ENCODE measurements at regions of chr17 and their contacts with region 1.

Region 1: DNA sequence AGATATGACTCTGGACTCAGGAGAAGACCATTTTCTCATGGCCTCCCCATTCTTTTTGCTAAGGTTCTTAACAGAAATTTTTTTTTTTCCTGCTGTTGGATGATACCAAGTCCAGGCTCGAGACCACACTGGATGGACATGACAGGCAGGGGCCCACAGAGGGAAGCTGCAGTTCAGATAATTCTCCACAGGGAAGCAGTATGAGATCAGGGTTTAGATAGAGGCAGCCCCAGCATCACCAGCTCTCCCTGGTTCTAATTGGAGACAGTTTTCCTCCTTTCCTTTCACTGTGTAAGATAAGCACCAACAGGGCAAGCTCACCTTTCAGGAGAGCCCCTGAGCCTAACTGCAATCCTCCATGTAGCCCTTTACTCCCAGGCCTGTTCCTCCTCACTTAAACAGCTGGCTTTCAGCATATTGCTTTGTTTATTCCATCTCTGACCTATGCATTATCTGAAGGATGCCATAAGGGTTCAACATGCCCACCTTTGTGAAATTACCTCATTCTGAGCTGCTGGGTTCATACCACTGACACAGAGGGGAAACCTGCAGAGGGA is 108.1 kb downstream of the SNX11 start:
- DNase-seq: peak; percentile 74
- H3K4me3 ChIP-seq: no peak overlapping the region
- H3K27ac ChIP-seq: no peak overlapping the region
- H3K4me1 ChIP-seq: peaks cover 3% of the 10 kb centered on the region
- H3K27me3 ChIP-seq: no peaks in the 10 kb centered on the region
- CTCF ChIP-seq: peak; percentile 71 to 90
- POLR2A ChIP-seq: no peak

Region 2: GRCh38 chr17:47742319-47743181 is 473.1 kb before region 1 on chr17:
- CTCF ChIA-PET with region 1: no interaction called
- POLR2A ChIA-PET with region 1: no interaction called
- dilution Hi-C with region 1: no loop called
- intact Hi-C with region 1: no loop called
- DNase-seq: no peak
- H3K4me3 ChIP-seq: no peak overlapping the region
- H3K27ac ChIP-seq: no peak overlapping the region
- H3K4me1 ChIP-seq: no peaks in the 10 kb centered on the region
- H3K27me3 ChIP-seq: peaks cover 0 to 7% of the 10 kb centered on the region in 2 experiments
- CTCF ChIP-seq: peak; percentile 35 to 61
- POLR2A ChIP-seq: no peak

Region 3: DNA sequence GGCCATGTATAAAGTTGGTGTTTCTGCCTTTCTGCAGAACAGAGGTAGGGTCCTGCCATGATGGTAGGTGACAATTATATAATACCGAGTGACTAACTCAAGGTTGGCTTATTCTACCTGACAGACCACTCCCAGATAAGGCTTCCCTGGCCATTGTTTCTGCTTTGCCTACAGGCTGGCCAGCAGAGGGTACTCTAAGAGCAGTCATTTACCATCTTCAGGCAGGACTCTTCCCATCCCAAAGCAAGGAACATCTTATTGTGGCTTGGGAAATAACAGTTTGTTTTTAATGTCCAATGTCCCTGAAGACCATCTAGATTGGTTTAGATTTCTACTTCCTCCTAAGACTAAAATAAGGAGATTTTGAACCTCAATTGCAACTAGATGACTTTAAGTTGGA is 34.0 kb before region 1 on chr17:
- CTCF ChIA-PET with region 1: interaction called, 13 read pairs
- POLR2A ChIA-PET with region 1: no interaction called
- dilution Hi-C with region 1: no loop called
- intact Hi-C with region 1: no loop called
- DNase-seq: peak; percentile 31
- H3K4me3 ChIP-seq: no peak overlapping the region
- H3K27ac ChIP-seq: no peak overlapping the region
- H3K4me1 ChIP-seq: no peaks in the 10 kb centered on the region
- H3K27me3 ChIP-seq: peaks cover 9 to 23% of the 10 kb centered on the region in 2 experiments
- CTCF ChIP-seq: peak; percentile 37 to 52
- POLR2A ChIP-seq: no peak

Region 4: DNA sequence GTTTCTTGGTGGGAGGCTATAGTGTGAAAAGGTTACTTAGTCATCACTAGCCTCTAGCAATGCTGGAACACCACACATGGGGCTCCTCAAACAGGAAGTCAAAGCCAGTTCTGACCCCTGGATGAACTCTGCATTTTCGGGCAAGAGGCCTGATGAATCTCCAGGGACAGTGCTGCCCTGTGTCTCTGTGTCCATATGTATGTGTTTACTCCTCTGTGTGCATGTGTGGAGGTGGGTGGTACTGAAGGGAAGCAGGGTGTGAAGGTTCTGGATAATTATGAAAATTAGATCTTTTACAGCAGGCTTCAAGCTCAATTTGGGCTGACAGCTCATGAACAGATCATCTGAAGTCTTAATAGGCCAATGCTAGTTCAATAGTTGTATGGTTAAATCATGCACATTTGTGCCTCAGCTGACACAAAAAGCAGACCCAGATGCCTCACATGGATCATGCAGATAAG is 25.5 kb after region 1 on chr17:
- CTCF ChIA-PET with region 1: interaction called, 43 read pairs
- POLR2A ChIA-PET with region 1: no interaction called
- dilution Hi-C with region 1: no loop called
- intact Hi-C with region 1: loop called (anchors 1 kb)
- DNase-seq: peak; percentile 73
- H3K4me3 ChIP-seq: no peak overlapping the region
- H3K27ac ChIP-seq: peak overlapping the region; percentile 90
- H3K4me1 ChIP-seq: peaks cover 92% of the 10 kb centered on the region
- H3K27me3 ChIP-seq: no peaks in the 10 kb centered on the region
- CTCF ChIP-seq: no peak
- POLR2A ChIP-seq: peak; percentile 14

Region 5: GRCh38 chr17:48335858-48336500 is 120.3 kb after region 1 on chr17:
- CTCF ChIA-PET with region 1: interaction called, 85 read pairs
- POLR2A ChIA-PET with region 1: no interaction called
- dilution Hi-C with region 1: no loop called
- intact Hi-C with region 1: loop called (anchors 1 kb)
- DNase-seq: peak; percentile 87
- H3K4me3 ChIP-seq: no peak overlapping the region
- H3K27ac ChIP-seq: no peak overlapping the region
- H3K4me1 ChIP-seq: no peaks in the 10 kb centered on the region
- H3K27me3 ChIP-seq: peaks cover 0 to 3% of the 10 kb centered on the region in 2 experiments
- CTCF ChIP-seq: peak; percentile 47 to 55
- POLR2A ChIP-seq: no peak

Region 6: GRCh38 chr17:48374650-48375230 is 159.1 kb after region 1 on chr17:
- CTCF ChIA-PET with region 1: interaction called, 22 read pairs
- POLR2A ChIA-PET with region 1: no interaction called
- dilution Hi-C with region 1: no loop called
- intact Hi-C with region 1: loop called (anchors 1 kb)
- DNase-seq: peak; percentile 26
- H3K4me3 ChIP-seq: no peak overlapping the region
- H3K27ac ChIP-seq: no peak overlapping the region
- H3K4me1 ChIP-seq: no peaks in the 10 kb centered on the region
- H3K27me3 ChIP-seq: peaks cover 45 to 62% of the 10 kb centered on the region in 2 experiments
- CTCF ChIP-seq: peak; percentile 64 to 65
- POLR2A ChIP-seq: no peak

Region 7: GRCh38 chr17:48586355-48587258 is 370.9 kb after region 1 on chr17:
- CTCF ChIA-PET with region 1: interaction called, 18 read pairs
- POLR2A ChIA-PET with region 1: no interaction called
- dilution Hi-C with region 1: no loop called
- intact Hi-C with region 1: no loop called
- DNase-seq: peak; percentile 36
- H3K4me3 ChIP-seq: peak overlapping the region; percentile 33 to 81 (median 61)
- H3K27ac ChIP-seq: peak overlapping the region; percentile 22
- H3K4me1 ChIP-seq: peaks cover 48% of the 10 kb centered on the region
- H3K27me3 ChIP-seq: no peaks in the 10 kb centered on the region
- CTCF ChIP-seq: no peak
- POLR2A ChIP-seq: no peak

Region 8: GRCh38 chr17:48618256-48618897 is 402.7 kb after region 1 on chr17:
- CTCF ChIA-PET with region 1: interaction called, 30 read pairs
- POLR2A ChIA-PET with region 1: no interaction called
- dilution Hi-C with region 1: no loop called
- intact Hi-C with region 1: loop called (anchors 1 kb)
- DNase-seq: peak; percentile 83
- H3K4me3 ChIP-seq: peak overlapping the region; percentile 3 to 46 (median 30)
- H3K27ac ChIP-seq: no peak overlapping the region
- H3K4me1 ChIP-seq: peaks cover 27% of the 10 kb centered on the region
- H3K27me3 ChIP-seq: peaks cover 66 to 79% of the 10 kb centered on the region in 2 experiments
- CTCF ChIP-seq: peak; percentile 91 to 99
- POLR2A ChIP-seq: no peak

Measured in endothelial cell of umbilical vein (primary cell).